ENCODE measurements at regions of chr7 and their contacts with region 1.

Region 1: GRCh38 chr7:32137059-32137458 is 66.9 kb upstream of the PDE1C start:
- DNase-seq: no peak
- H3K4me3 ChIP-seq: no peak overlapping the region
- H3K27ac ChIP-seq: no peak overlapping the region
- H3K4me1 ChIP-seq: no peaks in the 10 kb centered on the region
- H3K27me3 ChIP-seq: no peaks in the 10 kb centered on the region
- CTCF ChIP-seq: no peak
- POLR2A ChIP-seq: no peak

Region 2: DNA sequence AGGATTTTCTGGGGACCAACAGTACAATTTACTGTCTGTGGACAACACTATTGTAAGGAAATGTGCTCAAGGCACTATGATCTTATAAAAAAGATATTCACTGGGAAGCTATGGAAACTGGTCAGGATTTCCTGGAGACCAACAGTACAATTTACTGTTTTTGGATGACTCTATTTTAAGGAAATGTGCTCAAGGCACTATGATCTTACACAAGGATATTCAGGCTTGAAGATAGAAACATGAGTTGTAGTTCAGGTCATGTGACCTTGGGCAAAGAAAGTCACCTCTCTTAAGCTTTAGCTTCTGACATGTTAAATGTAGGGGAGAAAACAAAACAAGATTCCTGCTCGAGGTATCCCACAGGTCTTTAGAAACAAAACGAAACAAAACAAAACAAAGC is 624.9 kb before region 1 on chr7:
- intact Hi-C with region 1: no loop called
- DNase-seq: no peak
- H3K4me3 ChIP-seq: no peak overlapping the region
- H3K27ac ChIP-seq: peak overlapping the region in 1 of 2 donors; percentile 68
- H3K4me1 ChIP-seq: no peaks in the 10 kb centered on the region
- H3K27me3 ChIP-seq: no peaks in the 10 kb centered on the region
- CTCF ChIP-seq: no peak
- POLR2A ChIP-seq: no peak

Region 3: GRCh38 chr7:34133983-34134782 is 1997.1 kb after region 1 on chr7:
- intact Hi-C with region 1: loop called (anchors 10 kb)
- DNase-seq: no peak
- H3K4me3 ChIP-seq: no peak overlapping the region
- H3K27ac ChIP-seq: no peak overlapping the region
- H3K4me1 ChIP-seq: no peaks in the 10 kb centered on the region
- H3K27me3 ChIP-seq: no peaks in the 10 kb centered on the region
- CTCF ChIP-seq: peak in 1 of 3 donors; percentile 40
- POLR2A ChIP-seq: no peak